ENCODE measurements at regions of chr5 and their contacts with region 1.

Region 1: GRCh38 chr5:177454397-177455035 is 7.9 kb downstream of the PRR7 start:
- DNase-seq: peak; percentile 88 to 96 (median 94)
- H3K4me3 ChIP-seq: peak overlapping the region; percentile 44
- H3K27ac ChIP-seq: peak overlapping the region; percentile 26 to 49
- H3K4me1 ChIP-seq: peaks cover 7% of the 10 kb centered on the region
- H3K27me3 ChIP-seq: no peaks in the 10 kb centered on the region
- CTCF ChIP-seq: peak; percentile 91 to 98 (median 96)
- EP300 ChIP-seq: no peak
- POLR2A ChIP-seq: peak; percentile 39

Region 2: GRCh38 chr5:177311723-177312648 is 142.5 kb before region 1 on chr5 and contains the start of gene MXD3:
- intact Hi-C with region 1: loop called in 2 of 4 experiments (anchors 10 kb)
- DNase-seq: peak; percentile 95 to 98 (median 97)
- H3K4me3 ChIP-seq: peak within 1 kb of the TSS; percentile 52
- H3K27ac ChIP-seq: no peak within 1 kb of the TSS
- H3K4me1 ChIP-seq: peaks cover 3% of the 10 kb centered on the region
- H3K27me3 ChIP-seq: no peaks in the 10 kb centered on the region
- CTCF ChIP-seq: no peak
- EP300 ChIP-seq: no peak
- POLR2A ChIP-seq: no peak
- total RNA-seq, gene MXD3: 3.2 to 9.8 (median 6.2) TPM

Region 3: DNA sequence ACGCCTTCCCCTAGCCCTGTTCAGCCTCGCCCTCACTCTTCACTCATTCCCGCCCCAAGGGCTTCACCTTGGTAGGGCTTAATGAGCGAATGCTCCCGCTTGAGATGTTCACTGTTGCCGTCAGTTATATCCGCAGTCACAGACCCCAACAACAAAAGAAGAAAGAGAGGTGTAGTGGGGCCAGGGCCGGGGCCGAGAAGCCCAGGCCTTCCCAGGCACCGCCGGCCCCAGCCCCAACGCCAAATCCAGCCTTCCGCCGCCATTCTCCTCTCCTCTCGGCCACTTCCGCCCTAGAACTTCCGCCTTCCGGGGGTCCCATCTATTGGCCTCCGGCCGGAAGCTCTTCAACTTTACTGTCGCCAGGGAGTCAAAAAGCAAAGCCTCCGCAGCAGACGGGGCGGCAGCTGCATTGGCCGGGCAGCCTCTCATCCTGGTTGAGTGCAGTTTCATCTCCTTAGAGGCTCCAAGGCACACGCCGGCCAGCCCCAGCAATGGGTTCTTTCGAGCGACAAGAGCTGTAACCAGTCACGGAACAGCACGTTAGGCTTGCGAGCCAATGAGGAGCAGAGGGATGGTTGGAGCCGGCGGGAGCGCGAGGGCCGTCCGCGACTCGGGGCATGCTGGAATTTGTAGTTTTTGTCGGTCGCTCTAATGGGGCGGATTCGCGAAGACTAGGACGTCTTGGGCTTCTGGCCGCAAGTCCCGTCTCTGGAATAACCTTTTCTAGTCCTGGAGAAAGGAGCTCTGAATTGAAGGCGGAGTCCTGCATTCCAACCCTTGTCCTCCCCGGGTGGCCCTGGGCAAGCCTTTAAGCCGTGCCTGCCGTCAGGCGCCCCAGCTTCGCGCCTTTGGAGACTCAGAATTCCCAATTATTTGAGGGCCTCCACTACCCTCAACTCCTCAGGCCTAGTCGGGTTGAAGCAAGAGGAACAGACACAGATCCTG is 102.9 kb before region 1 on chr5 and contains the start of gene LMAN2:
- intact Hi-C with region 1: no loop called
- DNase-seq: peak; percentile 90 to 94 (median 91)
- H3K4me3 ChIP-seq: peak within 1 kb of the TSS; percentile 91
- H3K27ac ChIP-seq: peak within 1 kb of the TSS; percentile 50 to 80
- H3K4me1 ChIP-seq: peaks cover 14% of the 10 kb centered on the region
- H3K27me3 ChIP-seq: no peaks in the 10 kb centered on the region
- CTCF ChIP-seq: no peak
- EP300 ChIP-seq: no peak
- POLR2A ChIP-seq: peak; percentile 47
- total RNA-seq, gene LMAN2: 63.5 to 154 (median 93.5) TPM

Region 4: DNA sequence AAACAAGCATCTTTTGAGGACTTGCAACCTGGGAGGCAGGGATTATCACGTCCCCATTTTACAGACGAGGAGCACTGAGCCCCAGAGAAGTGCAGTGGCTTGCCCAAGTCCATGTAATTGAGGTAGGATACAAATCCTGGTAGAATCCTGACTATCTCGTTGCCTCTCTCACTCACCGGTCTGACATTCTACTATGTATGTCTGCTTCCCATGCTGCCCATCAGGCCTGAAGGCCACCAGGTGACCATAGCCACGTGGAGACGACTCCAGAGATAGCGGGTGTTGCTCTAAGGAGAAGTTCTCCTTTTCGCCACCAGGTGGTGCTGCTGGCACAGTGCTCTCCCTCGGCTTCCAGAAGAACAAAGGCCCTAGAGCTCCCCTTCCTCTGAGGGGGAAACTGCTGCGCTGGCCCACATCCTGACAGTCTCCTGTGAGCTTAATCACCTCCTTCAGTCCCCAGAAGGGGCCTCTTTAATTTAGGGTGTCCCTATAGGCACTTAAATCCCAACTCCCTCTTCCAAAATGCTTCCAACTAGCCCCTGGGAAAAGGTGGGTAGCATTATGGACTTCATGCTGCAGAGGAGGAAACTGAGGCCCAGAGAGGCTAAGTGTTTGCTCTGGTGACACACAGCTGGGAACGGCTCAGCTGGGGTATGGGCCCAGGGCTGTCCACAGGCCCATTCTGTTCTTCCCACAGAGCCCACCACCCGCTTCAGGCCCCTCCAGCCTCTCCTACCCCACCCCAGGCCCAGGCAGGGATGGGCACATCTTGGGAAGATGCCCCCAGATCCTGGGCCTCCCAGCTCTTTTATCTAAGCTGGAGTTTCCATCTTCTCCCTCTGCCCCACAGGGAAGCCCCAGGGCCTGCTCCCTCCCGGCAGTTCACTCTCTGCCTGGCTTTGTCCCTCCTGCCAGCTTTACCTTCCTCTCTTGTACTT is 63.9 kb before region 1 on chr5:
- intact Hi-C with region 1: loop called (anchors 2 to 5 kb)
- DNase-seq: peak; percentile 69 to 84 (median 81)
- H3K4me3 ChIP-seq: no peak overlapping the region
- H3K27ac ChIP-seq: no peak overlapping the region
- H3K4me1 ChIP-seq: no peaks in the 10 kb centered on the region
- H3K27me3 ChIP-seq: no peaks in the 10 kb centered on the region
- CTCF ChIP-seq: peak; percentile 93 to 97 (median 95)
- EP300 ChIP-seq: no peak
- POLR2A ChIP-seq: no peak

Region 5: GRCh38 chr5:177403792-177404640 is 50.5 kb before region 1 on chr5:
- intact Hi-C with region 1: loop called in 3 of 4 experiments (anchors 2 to 5 kb)
- DNase-seq: peak; percentile 79 to 88 (median 84)
- H3K4me3 ChIP-seq: peak overlapping the region; percentile 33
- H3K27ac ChIP-seq: no peak overlapping the region
- H3K4me1 ChIP-seq: peaks cover 9% of the 10 kb centered on the region
- H3K27me3 ChIP-seq: peaks cover 5% of the 10 kb centered on the region
- CTCF ChIP-seq: peak; percentile 62 to 83 (median 81)
- EP300 ChIP-seq: no peak
- POLR2A ChIP-seq: no peak

Region 6: GRCh38 chr5:177419051-177419450 is 35.5 kb before region 1 on chr5:
- intact Hi-C with region 1: loop called in 1 of 4 experiments (anchors 5 kb)
- DNase-seq: no peak
- H3K4me3 ChIP-seq: no peak overlapping the region
- H3K27ac ChIP-seq: no peak overlapping the region
- H3K4me1 ChIP-seq: no peaks in the 10 kb centered on the region
- H3K27me3 ChIP-seq: no peaks in the 10 kb centered on the region
- CTCF ChIP-seq: no peak
- EP300 ChIP-seq: no peak
- POLR2A ChIP-seq: no peak

Region 7: DNA sequence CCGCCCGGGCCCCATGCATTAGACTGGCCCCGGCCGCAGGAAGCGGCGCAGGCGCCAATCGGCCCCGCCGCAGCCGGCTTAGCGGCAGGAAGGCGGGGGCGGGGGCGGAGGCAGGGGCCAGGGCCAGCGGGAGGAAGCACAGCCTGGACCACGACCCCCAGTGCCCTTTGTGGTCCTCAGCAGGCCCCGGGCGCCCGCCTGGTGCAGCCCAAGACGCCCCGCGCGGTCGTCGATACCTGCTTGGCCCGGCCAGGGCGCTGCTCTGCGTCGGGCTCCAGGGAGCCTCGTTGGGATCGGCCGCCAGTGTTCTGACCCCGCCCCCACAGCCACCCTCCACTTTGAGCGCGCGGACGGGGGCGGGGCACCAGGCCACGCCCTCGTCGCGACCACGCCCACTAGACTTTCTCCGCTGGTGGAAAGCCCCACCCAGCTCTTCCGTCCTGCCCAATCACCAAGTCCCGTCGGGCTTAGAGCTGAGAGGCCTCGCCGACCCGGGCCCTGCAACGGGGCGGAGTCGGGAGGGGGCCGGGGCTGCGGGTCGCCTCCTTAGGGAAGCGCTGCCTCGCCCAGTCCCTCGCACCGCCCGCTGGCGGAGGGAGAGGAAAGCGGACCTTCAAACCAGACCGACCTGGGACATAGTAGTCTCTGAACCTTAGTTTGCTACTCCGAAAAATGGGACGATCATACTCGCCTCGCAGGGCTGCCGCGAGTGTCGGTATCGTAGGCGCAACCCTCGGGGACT is 42.9 kb after region 1 on chr5 and contains the start of gene PDLIM7:
- intact Hi-C with region 1: loop called in 3 of 4 experiments (anchors 1 to 2 kb)
- DNase-seq: peak; percentile 94 to 98 (median 97)
- H3K4me3 ChIP-seq: peak within 1 kb of the TSS; percentile 63
- H3K27ac ChIP-seq: peak within 1 kb of the TSS; percentile 62 to 65
- H3K4me1 ChIP-seq: peaks cover 13% of the 10 kb centered on the region
- H3K27me3 ChIP-seq: no peaks in the 10 kb centered on the region
- CTCF ChIP-seq: peak in 1 of 3 donors; percentile 14
- EP300 ChIP-seq: no peak
- POLR2A ChIP-seq: peak; percentile 90
- total RNA-seq, gene PDLIM7: 32.7 to 243 (median 151) TPM

Region 8: DNA sequence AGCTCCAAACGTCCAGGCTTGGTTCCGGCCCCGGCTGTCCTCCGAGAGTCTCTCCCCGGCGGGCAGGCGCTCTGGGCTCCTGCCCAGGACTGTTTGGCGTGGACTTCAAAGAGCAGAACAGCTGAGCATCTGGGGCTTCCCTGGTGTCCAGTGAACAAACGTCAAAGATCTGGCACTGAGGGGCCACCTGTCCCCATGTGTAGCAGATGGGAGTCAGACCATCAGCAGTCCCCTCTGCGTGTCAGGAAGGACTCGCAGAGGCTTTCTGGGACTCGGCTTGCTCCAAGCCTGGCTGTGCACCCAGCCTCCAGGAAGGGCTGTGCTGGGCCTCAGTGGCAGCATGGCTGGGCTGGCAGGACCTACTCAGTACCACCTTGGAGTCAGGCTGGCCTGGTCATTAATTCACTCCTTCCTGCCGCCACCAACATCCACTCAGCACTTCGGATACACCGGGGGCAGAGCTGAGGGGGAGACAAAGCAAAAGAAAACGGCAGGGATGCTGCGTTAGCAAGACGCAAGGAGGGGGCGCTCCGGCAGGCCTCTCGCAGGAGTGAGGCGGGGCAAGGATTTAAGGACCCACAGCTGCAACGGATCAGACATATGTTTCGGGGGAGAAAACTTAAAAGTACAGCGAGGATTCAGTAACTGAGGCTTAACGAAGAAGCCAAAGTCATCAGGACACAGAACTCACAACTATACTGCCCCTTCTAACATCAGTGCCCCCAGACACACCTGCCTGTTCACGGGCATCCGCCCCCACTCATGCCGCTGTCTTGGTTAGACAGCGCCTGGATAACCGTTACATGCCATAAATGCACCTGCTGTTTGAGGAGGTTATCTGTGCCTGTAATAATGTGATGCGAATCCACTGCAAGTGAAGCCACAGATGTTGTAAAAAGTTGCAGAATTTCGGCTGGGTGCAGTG is 942.5 kb after region 1 on chr5:
- intact Hi-C with region 1: no loop called
- DNase-seq: peak in 1 of 5 donors; percentile 2
- H3K4me3 ChIP-seq: no peak overlapping the region
- H3K27ac ChIP-seq: no peak overlapping the region
- H3K4me1 ChIP-seq: no peaks in the 10 kb centered on the region
- H3K27me3 ChIP-seq: no peaks in the 10 kb centered on the region
- CTCF ChIP-seq: no peak
- EP300 ChIP-seq: no peak
- POLR2A ChIP-seq: no peak